Aorta (tissue), 5 donors: ENCODE measurements at regions of chr9 and their contacts with region 1.

Region 1: GRCh38 chr9:69186841-69187611 is 12.9 kb downstream of the TJP2 start:
- DNase-seq: no peak
- ATAC-seq: peak; percentile 39
- H3K4me3 ChIP-seq: no peak overlapping the region
- H3K27ac ChIP-seq: peak overlapping the region; percentile 58 to 82
- H3K4me1 ChIP-seq: peaks cover 5 to 21% of the 10 kb centered on the region in 2 donors
- H3K27me3 ChIP-seq: no peaks in the 10 kb centered on the region

Region 2: DNA sequence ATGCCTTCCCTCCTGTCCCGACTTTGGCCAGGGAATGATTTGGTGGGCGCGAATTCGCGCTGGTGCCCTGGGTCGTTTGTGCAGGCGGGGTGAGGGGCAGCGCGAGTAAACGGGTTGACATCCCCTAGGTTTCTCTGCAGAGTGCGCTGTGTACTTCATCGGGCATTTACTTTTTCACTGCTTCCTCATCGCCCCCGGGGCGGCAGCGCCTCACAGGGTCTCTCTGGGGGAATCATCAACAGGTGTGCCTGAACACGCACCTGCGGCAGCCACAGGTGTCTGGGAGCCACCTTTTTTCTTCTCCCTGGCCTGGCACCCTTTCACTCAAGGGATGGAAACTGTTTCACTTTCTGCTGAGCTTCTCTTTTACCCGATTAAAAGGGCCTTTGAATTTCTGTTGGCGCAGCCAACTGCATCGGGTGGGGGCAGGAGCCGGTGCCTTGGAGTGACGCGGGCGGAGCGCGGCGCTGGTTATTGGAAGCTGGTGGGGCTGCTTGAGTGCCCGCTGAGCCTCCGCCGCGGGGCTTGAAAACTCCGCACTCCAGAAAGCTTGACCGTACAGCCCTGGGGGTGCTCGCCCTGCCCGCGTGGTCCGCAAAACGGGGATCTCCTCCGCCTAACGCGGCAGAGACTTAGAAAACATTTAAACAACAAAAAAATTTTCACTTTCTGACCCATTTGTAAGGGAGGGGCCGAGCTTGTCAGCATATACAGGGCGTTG is 65.0 kb before region 1 on chr9:
- intact Hi-C with region 1: loop called in 1 of 2 experiments (anchors 2 kb)
- DNase-seq: peak; percentile 85 to 91
- ATAC-seq: peak; percentile 89
- H3K4me3 ChIP-seq: peak overlapping the region; percentile 84 to 87
- H3K27ac ChIP-seq: peak overlapping the region; percentile 64 to 81
- H3K4me1 ChIP-seq: no peaks in the 10 kb centered on the region
- H3K27me3 ChIP-seq: no peaks in the 10 kb centered on the region

Region 3: GRCh38 chr9:69155341-69156030 is 31.5 kb before region 1 on chr9:
- intact Hi-C with region 1: loop called in 1 of 2 experiments (anchors 5 kb)
- DNase-seq: no peak
- ATAC-seq: no peak
- H3K4me3 ChIP-seq: no peak overlapping the region
- H3K27ac ChIP-seq: no peak overlapping the region
- H3K4me1 ChIP-seq: no peaks in the 10 kb centered on the region
- H3K27me3 ChIP-seq: no peaks in the 10 kb centered on the region

Region 4: GRCh38 chr9:69249337-69249736 is 62.3 kb after region 1 on chr9:
- intact Hi-C with region 1: no loop called
- DNase-seq: no peak
- ATAC-seq: no peak
- H3K4me3 ChIP-seq: no peak overlapping the region
- H3K27ac ChIP-seq: no peak overlapping the region
- H3K4me1 ChIP-seq: no peaks in the 10 kb centered on the region
- H3K27me3 ChIP-seq: no peaks in the 10 kb centered on the region